ENCODE measurements at regions of chr3 and their contacts with region 1.

Region 1: DNA sequence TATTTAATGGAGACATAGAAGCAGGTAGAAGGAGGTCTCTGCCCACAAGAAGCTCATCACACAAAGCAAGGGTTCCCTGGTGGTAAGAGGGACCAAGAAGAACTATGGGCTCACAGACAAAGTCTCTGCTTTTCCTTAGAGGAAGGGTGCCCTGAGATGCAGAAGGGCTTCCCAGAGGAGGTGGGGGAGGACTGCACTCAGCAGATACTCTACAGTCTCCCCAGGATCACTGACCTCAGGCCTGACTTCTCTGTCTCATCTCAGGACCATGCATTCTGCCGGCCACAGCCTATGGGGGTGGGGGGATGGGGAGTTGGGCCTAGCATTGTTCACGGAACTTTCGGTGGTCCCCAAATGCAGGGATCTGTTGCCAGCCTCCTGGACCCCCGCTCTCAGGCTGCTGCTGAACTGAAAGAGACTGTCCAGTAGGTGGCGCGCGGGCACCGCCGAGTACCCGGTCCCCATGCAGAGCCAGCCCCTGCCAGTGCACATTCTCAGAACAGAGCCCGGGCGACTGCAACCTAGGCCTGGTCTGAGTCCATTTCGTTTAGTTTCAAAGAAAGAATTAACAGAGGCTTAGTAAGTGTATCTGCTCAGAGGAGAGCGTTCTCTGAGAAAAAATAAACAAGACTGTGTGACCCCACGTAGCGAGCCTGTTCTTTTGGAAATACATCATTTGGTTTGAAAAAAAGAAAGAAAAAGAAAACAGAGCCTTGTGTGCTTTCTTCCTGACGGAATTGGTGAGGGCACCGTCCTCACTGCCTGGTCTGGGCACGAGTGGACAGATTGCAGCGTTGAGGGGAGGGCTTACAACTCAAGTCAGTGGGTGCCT is 74.1 kb downstream of the LRTM1 start:
- DNase-seq: peak; percentile 84 to 93 (median 89)
- ATAC-seq: peak; percentile 91 to 93
- H3K4me3 ChIP-seq: no peak overlapping the region
- H3K27ac ChIP-seq: no peak overlapping the region
- H3K4me1 ChIP-seq: no peaks in the 10 kb centered on the region
- H3K27me3 ChIP-seq: no peaks in the 10 kb centered on the region

Region 2: DNA sequence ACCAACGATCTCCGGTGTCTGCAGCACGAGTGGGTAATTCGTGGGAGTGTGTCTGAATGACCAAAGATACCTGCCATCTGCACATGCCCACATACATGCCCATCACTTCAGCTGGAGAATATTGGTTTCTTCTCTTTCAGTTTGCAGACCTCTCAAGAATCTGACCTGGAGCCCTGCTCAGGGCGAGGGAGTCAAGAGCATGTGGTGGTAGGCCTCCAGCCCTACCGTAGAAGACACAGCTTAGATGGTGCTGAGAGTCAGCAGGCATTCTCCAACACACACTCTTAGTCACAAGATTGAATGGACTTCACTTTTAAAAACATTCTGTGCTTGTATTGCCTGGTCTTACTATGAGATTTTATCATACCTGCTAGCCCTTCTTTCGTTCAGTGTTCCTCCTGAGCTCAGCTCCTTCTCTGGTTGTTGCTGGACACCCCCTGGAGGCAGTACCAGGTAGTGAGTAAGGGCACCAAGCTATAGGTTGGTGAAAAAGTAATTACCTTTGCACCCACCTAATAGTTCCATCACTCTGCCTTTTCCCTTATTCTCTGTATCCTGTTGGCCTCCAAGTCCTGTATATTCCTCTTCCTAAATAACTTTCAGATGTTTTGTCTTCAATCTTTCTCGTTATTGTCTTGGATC is 479.5 kb before region 1 on chr3:
- intact Hi-C with region 1: no loop called
- DNase-seq: no peak
- ATAC-seq: no peak
- H3K4me3 ChIP-seq: no peak overlapping the region
- H3K27ac ChIP-seq: no peak overlapping the region
- H3K4me1 ChIP-seq: peaks cover 15% of the 10 kb centered on the region
- H3K27me3 ChIP-seq: no peaks in the 10 kb centered on the region

Region 3: DNA sequence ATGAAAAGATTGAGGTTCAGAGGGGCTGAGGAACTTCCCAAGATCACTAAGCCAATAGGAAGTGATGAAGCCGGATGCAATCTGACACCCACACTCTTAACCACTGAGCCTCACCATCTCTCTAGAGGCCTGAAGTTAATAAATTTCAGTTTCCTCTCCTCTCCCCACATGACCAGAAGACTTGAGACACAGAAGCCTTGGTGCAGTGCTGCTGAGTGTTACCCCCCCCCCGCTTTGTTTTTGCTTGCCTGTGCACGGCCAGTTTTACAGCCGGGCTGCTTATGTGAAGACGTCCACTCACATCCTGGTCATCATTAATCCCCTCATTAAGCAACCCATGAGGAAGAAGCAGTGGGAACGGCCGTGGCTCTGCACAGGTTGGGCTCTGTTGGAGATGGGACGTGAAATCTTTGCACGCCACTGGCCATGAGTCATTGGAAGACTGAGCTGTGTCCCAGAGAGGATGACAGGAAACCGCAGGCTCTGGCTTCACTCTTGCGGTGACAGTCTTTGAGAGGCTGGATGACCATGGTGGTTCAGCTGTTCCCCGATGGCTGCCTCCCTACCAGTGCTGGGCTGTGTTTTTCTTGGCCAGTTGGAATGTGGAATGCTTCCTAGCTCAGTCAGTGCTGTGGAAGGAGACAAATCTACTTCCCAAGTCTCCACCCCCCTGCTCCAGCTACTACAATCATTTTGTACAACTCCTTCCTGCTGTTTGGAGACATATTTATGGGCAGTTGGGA is 306.6 kb after region 1 on chr3:
- intact Hi-C with region 1: loop called in 1 of 4 experiments (anchors 10 kb)
- DNase-seq: peak; percentile 55 to 59 (median 58)
- ATAC-seq: peak; percentile 68 to 83
- H3K4me3 ChIP-seq: no peak overlapping the region
- H3K27ac ChIP-seq: no peak overlapping the region
- H3K4me1 ChIP-seq: no peaks in the 10 kb centered on the region
- H3K27me3 ChIP-seq: no peaks in the 10 kb centered on the region

Region 4: GRCh38 chr3:55180936-55181535 is 327.2 kb after region 1 on chr3:
- intact Hi-C with region 1: loop called in 2 of 4 experiments (anchors 10 kb)
- DNase-seq: no peak
- ATAC-seq: no peak
- H3K4me3 ChIP-seq: no peak overlapping the region
- H3K27ac ChIP-seq: no peak overlapping the region
- H3K4me1 ChIP-seq: no peaks in the 10 kb centered on the region
- H3K27me3 ChIP-seq: peaks cover 3% of the 10 kb centered on the region